GM12878 (cell line): ENCODE measurements at regions of chr7 and their contacts with region 1.

Region 1: DNA sequence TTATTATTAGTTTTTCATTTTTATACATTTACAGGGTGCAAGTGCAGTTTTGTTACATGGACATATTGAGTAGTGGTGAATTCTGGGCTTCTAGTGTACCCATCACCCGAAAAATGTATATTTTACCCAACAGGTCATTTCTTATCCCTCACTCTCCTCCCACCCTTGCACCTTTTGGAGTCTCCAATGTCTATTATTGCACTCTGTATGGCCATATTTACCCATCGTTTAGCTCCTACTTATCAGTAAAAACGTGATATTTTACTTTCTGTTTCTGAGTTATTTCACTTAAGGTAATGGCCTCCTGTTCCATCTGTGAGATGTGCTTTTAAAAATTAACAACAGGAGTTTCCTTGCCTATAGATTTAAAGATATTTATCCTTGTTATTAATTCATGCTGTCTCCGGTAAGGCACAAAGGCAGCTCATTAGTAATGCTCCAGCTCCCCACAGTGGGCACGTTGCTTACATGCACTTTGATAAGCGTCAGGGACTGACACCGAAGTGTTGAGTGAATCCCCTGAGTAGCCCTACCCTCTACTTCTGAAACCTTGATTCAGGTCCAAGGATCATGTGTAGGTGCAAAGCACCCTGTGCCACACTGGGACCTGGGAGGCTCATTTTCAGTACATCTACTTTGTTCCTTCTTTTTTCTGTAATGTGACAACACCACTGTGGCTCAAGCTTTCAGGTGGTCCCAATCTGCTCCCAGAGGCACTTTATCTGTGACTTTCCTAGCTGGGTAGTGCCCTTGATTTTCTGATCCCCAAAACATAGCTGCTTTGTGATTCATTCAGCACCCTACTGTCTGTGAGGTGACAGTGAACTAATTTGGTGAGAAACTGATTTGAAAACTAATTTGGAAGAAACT is 27.3 kb downstream of the HYAL4 start:
- DNase-seq: no peak
- ATAC-seq: peak; percentile 98
- H3K4me3 ChIP-seq: no peak overlapping the region
- H3K27ac ChIP-seq: no peak overlapping the region
- H3K4me1 ChIP-seq: no peaks in the 10 kb centered on the region
- H3K27me3 ChIP-seq: no peaks in the 10 kb centered on the region
- CTCF ChIP-seq: peak; percentile 61 to 86 (median 63)
- EP300 ChIP-seq: no peak
- POLR2A ChIP-seq: no peak
- RAD21 ChIP-seq: peak; percentile 88

Region 2: GRCh38 chr7:123494193-123494796 is 377.9 kb before region 1 on chr7:
- CTCF ChIA-PET with region 1: interaction called, 62 read pairs
- POLR2A ChIA-PET with region 1: no interaction called
- RAD21 ChIA-PET with region 1: interaction called, 24 read pairs
- SMC1A ChIA-PET with region 1: interaction called, 16 read pairs
- in situ Hi-C with region 1: loop called (anchors 10 kb)
- intact Hi-C with region 1: loop called (anchors 1 kb)
- DNase-seq: no peak
- ATAC-seq: peak; percentile 67
- H3K4me3 ChIP-seq: no peak overlapping the region
- H3K27ac ChIP-seq: no peak overlapping the region
- H3K4me1 ChIP-seq: no peaks in the 10 kb centered on the region
- H3K27me3 ChIP-seq: no peaks in the 10 kb centered on the region
- CTCF ChIP-seq: peak; percentile 56 to 63 (median 62)
- EP300 ChIP-seq: no peak
- POLR2A ChIP-seq: no peak
- RAD21 ChIP-seq: peak; percentile 74

Region 3: GRCh38 chr7:123635551-123636359 is 236.5 kb before region 1 on chr7:
- CTCF ChIA-PET with region 1: interaction called, 15 read pairs
- POLR2A ChIA-PET with region 1: no interaction called
- RAD21 ChIA-PET with region 1: interaction called, 12 read pairs
- SMC1A ChIA-PET with region 1: interaction called, 14 read pairs
- in situ Hi-C with region 1: no loop called
- intact Hi-C with region 1: loop called (anchors 5 kb)
- DNase-seq: no peak
- ATAC-seq: 0 out of 3 replicates have a peak, but pooled peaks have one; percentile 49
- H3K4me3 ChIP-seq: no peak overlapping the region
- H3K27ac ChIP-seq: no peak overlapping the region
- H3K4me1 ChIP-seq: no peaks in the 10 kb centered on the region
- H3K27me3 ChIP-seq: no peaks in the 10 kb centered on the region
- CTCF ChIP-seq: peak; percentile 35 to 43 (median 40); a peak in 5 of 6 replicates
- EP300 ChIP-seq: no peak
- POLR2A ChIP-seq: no peak
- RAD21 ChIP-seq: peak; percentile 67

Region 4: GRCh38 chr7:123770378-123770777 is 101.9 kb before region 1 on chr7:
- CTCF ChIA-PET with region 1: interaction called, 18 read pairs
- POLR2A ChIA-PET with region 1: no interaction called
- RAD21 ChIA-PET with region 1: interaction called, 4 read pairs
- SMC1A ChIA-PET with region 1: interaction called, 8 read pairs
- in situ Hi-C with region 1: no loop called
- intact Hi-C with region 1: no loop called
- DNase-seq: no peak
- ATAC-seq: peak; percentile 99
- H3K4me3 ChIP-seq: no peak overlapping the region
- H3K27ac ChIP-seq: no peak overlapping the region; the same call in 1 of the 2 replicates
- H3K4me1 ChIP-seq: no peaks in the 10 kb centered on the region
- H3K27me3 ChIP-seq: no peaks in the 10 kb centered on the region
- CTCF ChIP-seq: no peak
- EP300 ChIP-seq: peak in 1 of 2 experiments; percentile 47; a peak in 1 of 4 replicates
- POLR2A ChIP-seq: no peak
- RAD21 ChIP-seq: no peak

Region 5: GRCh38 chr7:123805287-123805686 is 66.9 kb before region 1 on chr7:
- CTCF ChIA-PET with region 1: interaction called, 208 read pairs
- POLR2A ChIA-PET with region 1: no interaction called
- RAD21 ChIA-PET with region 1: interaction called, 4 read pairs
- SMC1A ChIA-PET with region 1: interaction called, 93 read pairs
- in situ Hi-C with region 1: no loop called
- intact Hi-C with region 1: no loop called
- DNase-seq: no peak
- ATAC-seq: 0 out of 3 replicates have a peak, but pooled peaks have one; percentile 43
- H3K4me3 ChIP-seq: no peak overlapping the region
- H3K27ac ChIP-seq: no peak overlapping the region
- H3K4me1 ChIP-seq: no peaks in the 10 kb centered on the region
- H3K27me3 ChIP-seq: no peaks in the 10 kb centered on the region
- CTCF ChIP-seq: no peak
- EP300 ChIP-seq: no peak
- POLR2A ChIP-seq: no peak
- RAD21 ChIP-seq: no peak

Region 6: GRCh38 chr7:123888192-123888591 is 16.0 kb after region 1 on chr7:
- CTCF ChIA-PET with region 1: interaction called, 10 read pairs
- POLR2A ChIA-PET with region 1: no interaction called
- RAD21 ChIA-PET with region 1: interaction called, 3 read pairs
- SMC1A ChIA-PET with region 1: interaction called, 5 read pairs
- in situ Hi-C with region 1: no loop called
- intact Hi-C with region 1: no loop called
- DNase-seq: no peak
- ATAC-seq: no peak
- H3K4me3 ChIP-seq: no peak overlapping the region
- H3K27ac ChIP-seq: no peak overlapping the region
- H3K4me1 ChIP-seq: no peaks in the 10 kb centered on the region
- H3K27me3 ChIP-seq: no peaks in the 10 kb centered on the region
- CTCF ChIP-seq: no peak
- EP300 ChIP-seq: no peak
- POLR2A ChIP-seq: no peak
- RAD21 ChIP-seq: no peak